ENCODE measurements at regions of chr17 and their contacts with region 1.

Region 1: GRCh38 chr17:29133146-29133713 is 47.0 kb downstream of the MYO18A start:
- H3K4me3 ChIP-seq: no peak overlapping the region
- H3K27ac ChIP-seq: no peak overlapping the region
- H3K4me1 ChIP-seq: peaks cover 2% of the 10 kb centered on the region; the same call in 1 of the 2 replicates
- CTCF ChIP-seq: no peak

Region 2: GRCh38 chr17:29148790-29149430 is 15.7 kb after region 1 on chr17:
- CTCF ChIA-PET with region 1: interaction called, 67 read pairs
- POLR2A ChIA-PET with region 1: no interaction called
- H3K4me3 ChIP-seq: peak overlapping the region; percentile 44
- H3K27ac ChIP-seq: peak overlapping the region; percentile 48
- H3K4me1 ChIP-seq: peaks cover 10% of the 10 kb centered on the region
- CTCF ChIP-seq: peak; percentile 97

Measured in HEK293 (cell line).